H1 (cell line): ENCODE measurements at regions of chr17 and their contacts with region 1.

Region 1: DNA sequence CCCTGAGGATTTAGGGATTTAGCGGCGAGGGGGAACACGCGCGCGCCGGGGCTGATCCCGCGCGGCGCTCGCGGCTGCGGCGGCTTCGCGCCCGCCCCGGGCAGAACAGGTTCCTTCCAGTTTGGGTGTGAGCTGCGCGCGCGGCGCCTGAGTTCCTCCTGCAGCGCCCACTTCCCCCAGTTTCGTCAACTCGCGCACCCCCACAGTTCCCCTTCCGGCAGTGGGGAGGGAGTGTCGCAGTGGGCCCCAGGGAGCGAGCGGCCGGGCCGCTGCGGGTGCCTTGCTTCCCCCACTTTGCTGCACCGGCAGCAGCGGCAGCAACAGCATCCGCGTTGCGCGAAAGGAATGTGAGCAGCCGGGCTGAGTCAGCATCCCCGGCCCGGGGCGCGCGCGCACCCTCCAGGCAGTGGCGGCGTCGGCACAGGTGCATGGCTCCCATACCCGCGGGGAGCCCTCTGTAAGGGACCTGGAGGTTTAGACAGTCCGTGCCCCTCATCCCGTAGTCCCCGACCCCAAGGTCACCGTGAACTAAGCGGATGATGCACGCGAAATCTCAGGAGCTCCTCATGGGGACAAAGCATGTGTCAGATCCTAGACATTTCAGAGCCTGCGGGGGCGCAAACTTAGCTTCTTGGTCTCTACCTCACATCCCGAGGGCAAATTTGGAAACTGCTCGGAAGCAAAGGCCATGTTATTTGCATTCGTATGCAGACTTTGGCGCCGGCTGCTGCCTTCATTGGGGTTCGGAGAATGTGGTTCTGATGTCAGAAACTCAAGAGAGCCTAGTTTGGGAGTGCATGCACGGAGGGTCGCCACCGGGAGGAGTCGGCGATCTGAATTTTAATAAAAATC is 775 bp downstream of the ARSG start:
- DNase-seq: peak in 1 of 2 experiments; percentile 85
- H3K4me3 ChIP-seq: peak overlapping the region; percentile 41 to 67 (median 56)
- H3K27ac ChIP-seq: 0 out of 2 replicates have a peak overlapping the region, but pooled peaks have one; percentile 44
- H3K4me1 ChIP-seq: peaks cover 18 to 40% (median 29%) of the 10 kb centered on the region in 4 experiments
- H3K27me3 ChIP-seq: peaks cover 8 to 25% (median 24%) of the 10 kb centered on the region in 4 experiments
- CTCF ChIP-seq: peak in 2 of 3 experiments; percentile 3 to 40; a peak in 3 of 4 replicates
- EP300 ChIP-seq: no peak
- POLR2A ChIP-seq: peak; percentile 37 to 61
- RAD21 ChIP-seq: peak; percentile 24 to 46; a peak in 3 of 4 replicates

Region 2: DNA sequence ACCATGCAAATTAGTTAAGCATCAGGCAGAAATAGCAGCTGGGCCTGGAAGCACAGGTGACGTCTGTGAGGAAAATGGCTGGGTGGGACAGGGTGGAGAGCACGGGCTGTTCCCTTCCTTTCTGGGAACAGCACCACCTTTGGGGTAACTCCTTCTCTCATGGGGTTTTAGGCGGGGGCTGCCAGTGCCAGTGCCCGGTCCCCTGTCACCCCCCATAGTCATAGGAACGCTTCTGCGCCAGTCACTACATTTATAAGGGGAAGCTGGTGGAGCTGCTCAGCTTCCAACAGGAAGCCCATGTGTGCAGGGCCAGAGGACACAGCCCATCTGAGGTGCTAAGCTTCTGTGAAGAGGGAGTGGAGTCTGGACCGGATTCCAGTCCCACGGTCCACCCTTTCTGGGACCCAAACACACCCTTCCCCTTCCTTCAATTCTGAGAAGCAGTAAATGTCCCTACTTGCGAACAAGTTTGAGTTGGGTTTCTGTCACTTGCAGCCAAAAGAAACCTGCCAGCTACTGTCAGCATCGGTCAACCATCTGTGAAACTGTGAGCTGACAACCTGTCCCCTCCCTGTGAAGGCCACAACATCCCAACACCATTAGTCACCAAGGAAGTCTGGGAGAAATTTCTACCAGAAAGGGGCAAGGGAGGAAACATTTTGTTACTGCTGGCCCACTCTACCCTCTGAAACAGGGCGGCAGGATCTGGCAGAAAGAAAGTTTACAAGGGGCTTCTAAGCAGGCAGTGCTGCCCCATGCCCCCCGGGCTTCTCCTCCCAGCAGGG is 130.2 kb before region 1 on chr17:
- CTCF ChIA-PET with region 1: no interaction called
- POLR2A ChIA-PET with region 1: no interaction called
- DNase-seq: no peak
- H3K4me3 ChIP-seq: no peak overlapping the region
- H3K27ac ChIP-seq: no peak overlapping the region
- H3K4me1 ChIP-seq: no peaks in the 10 kb centered on the region
- H3K27me3 ChIP-seq: no peaks in the 10 kb centered on the region
- CTCF ChIP-seq: no peak
- EP300 ChIP-seq: no peak
- POLR2A ChIP-seq: no peak
- RAD21 ChIP-seq: no peak

Region 3: DNA sequence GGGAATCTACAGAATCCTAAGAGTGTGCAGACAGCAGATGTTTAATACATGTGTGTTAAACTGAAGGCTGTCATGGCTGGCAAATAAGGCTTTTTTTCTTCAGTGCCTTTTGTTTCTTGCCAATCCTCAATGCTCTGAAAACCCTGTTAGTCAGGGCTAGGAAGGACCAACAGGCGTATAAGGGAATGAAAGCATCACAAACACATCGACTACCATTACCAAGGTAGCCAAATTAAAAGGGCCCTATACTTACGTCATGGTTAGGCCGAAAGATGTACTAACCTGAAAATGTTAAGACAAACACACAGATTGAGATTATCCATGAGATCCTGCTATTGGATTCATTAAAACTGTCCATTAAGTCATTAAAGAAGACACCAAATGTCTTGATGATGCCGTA is 14.3 kb before region 1 on chr17:
- CTCF ChIA-PET with region 1: interaction called, 4 read pairs
- POLR2A ChIA-PET with region 1: interaction called, 18 read pairs
- DNase-seq: no peak
- H3K4me3 ChIP-seq: no peak overlapping the region
- H3K27ac ChIP-seq: no peak overlapping the region
- H3K4me1 ChIP-seq: no peaks in the 10 kb centered on the region
- H3K27me3 ChIP-seq: no peaks in the 10 kb centered on the region
- CTCF ChIP-seq: no peak
- EP300 ChIP-seq: no peak
- POLR2A ChIP-seq: no peak
- RAD21 ChIP-seq: no peak

Region 4: GRCh38 chr17:68306819-68307218 is 14.7 kb after region 1 on chr17:
- CTCF ChIA-PET with region 1: interaction called, 5 read pairs
- POLR2A ChIA-PET with region 1: interaction called, 14 read pairs
- DNase-seq: no peak
- H3K4me3 ChIP-seq: no peak overlapping the region
- H3K27ac ChIP-seq: no peak overlapping the region
- H3K4me1 ChIP-seq: peaks cover 2 to 9% (median 3%) of the 10 kb centered on the region in 4 experiments; a peak in 6 of 7 replicates
- H3K27me3 ChIP-seq: no peaks in the 10 kb centered on the region
- CTCF ChIP-seq: no peak
- EP300 ChIP-seq: no peak
- POLR2A ChIP-seq: no peak
- RAD21 ChIP-seq: no peak

Region 5: GRCh38 chr17:68640242-68640989 is 348.3 kb after region 1 on chr17:
- CTCF ChIA-PET with region 1: no interaction called
- POLR2A ChIA-PET with region 1: no interaction called
- DNase-seq: no peak
- H3K4me3 ChIP-seq: no peak overlapping the region
- H3K27ac ChIP-seq: no peak overlapping the region
- H3K4me1 ChIP-seq: peaks cover 0 to 4% (median 0%) of the 10 kb centered on the region in 4 experiments; a peak in 1 of 7 replicates
- H3K27me3 ChIP-seq: no peaks in the 10 kb centered on the region
- CTCF ChIP-seq: no peak
- EP300 ChIP-seq: no peak
- POLR2A ChIP-seq: no peak
- RAD21 ChIP-seq: no peak